RWPE1 (cell line): ENCODE measurements at regions of chr3 and their contacts with region 1.

Region 1: DNA sequence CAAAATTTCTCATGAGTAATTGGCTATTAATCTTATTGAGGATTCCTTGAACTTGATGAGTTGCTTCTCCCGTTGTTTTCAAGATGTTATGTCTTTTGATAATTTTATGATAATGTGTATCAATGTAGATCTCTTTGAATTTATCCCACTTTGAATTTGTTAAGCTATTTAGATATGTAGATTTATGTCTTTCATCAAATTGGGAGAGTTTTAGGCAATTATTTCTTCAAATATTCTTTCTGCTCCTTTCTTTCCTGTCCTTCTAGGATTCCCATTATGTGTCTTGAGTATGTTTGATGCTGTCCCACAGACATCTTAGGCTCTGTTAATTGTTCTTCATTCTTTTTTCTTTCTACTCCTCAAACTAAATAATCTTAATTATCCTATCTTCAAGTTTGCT is 68.1 kb upstream of the FGD5 start:
- DNase-seq: no peak
- H3K27ac ChIP-seq: no peak overlapping the region
- CTCF ChIP-seq: no peak

Region 2: GRCh38 chr3:13332158-13332557 is 1418.5 kb before region 1 on chr3:
- CTCF ChIA-PET with region 1: interaction called, 10 read pairs
- POLR2A ChIA-PET with region 1: no interaction called
- DNase-seq: peak; percentile 3
- H3K27ac ChIP-seq: no peak overlapping the region
- CTCF ChIP-seq: no peak

Region 3: GRCh38 chr3:14532691-14533456 is 217.8 kb before region 1 on chr3:
- CTCF ChIA-PET with region 1: no interaction called
- POLR2A ChIA-PET with region 1: no interaction called
- DNase-seq: peak; percentile 53
- H3K27ac ChIP-seq: no peak overlapping the region
- CTCF ChIP-seq: no peak